ENCODE measurements at regions of chr4 and their contacts with region 1.

Region 1: DNA sequence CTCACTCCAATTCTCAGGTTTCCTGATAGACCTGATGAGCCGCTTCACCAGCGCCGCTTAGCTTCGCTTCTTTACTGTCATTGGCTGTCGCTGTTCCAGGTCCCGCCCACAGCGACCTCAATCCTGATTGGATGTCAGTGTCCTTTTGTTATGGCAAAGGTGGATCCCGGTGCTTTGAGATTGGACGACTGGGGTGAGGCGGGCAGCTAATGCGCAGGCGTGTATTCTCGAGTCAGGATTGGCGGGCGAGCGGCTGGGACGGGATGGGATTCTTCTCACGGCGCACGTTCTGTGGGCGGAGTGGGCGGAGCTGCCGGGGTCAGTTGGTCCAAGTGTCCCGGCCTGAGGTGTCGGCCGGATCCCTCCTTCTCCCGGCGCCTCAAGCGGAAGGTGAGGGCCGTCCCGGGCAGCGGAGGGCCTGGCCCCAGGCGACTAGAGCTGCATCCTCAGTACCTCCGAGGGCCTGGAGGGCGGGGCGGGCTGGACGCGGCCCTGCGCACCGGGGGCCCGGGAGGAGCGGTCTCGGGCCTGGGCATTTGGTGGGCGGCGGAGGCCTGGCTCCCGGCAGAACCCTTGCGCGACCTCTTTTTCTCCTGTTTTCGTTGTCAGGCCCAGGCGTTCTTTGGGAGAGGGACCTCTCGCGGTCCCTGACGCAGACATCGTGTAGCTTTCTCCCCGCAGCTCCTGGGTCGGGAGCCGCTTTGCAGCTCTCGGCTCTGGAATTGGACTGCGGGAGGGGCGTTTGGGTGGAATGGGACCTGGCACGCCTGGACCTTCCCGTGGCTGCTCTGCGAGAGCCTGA is at the start of gene SCOC:
- DNase-seq: peak; percentile 99
- ATAC-seq: peak; percentile 100
- H3K4me3 ChIP-seq: peak within 1 kb of the TSS; percentile 77 to 89
- H3K27ac ChIP-seq: peak within 1 kb of the TSS; percentile 67 to 83
- H3K4me1 ChIP-seq: peaks cover 0 to 2% of the 10 kb centered on the region in 2 donors
- H3K27me3 ChIP-seq: no peaks in the 10 kb centered on the region
- total RNA-seq, gene SCOC: 38.5 to 45.6 TPM

Region 2: DNA sequence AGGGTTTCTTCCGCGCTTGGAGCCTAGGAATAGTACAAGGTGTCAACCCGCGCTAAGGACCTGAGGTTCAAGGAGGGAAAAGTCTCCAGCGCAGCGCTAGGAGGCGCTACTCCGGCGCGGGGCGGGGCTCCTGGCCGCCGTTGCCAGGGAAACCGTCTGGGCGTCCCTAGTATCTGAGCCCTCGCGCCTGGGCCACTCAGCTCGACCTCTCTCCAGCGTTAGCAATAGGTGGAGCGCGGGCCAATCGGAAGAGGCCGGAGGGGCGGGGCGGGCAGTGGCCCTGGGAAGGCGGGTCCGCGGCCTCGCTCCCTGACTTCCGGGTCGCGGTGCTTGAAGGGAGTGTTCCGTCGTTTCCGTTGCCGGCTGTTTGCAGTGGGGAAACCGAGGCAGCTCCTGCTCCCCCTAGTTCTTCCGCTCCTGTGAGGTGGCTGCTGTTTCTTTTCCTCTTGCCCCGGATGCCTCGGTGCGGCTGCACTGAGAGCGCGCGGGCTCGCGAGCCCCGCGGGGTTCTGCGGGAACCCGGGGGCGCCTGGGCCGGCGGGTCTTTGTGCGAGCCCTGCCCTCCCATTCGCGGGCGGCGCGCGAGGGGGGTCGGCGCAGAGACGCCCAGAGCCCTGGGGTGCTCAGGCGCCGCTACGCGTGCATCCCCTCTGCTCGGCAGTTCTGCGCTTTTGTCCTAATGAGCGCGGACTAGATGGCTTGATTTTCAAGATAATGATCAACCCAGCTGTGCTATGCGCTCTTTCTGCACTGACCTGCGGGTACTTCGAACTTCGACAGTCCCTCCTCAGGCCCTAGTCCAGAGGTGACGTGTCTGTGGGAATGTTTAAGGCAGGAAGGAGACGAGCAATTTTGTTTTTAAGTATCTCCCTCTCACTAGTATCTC is 150.6 kb after region 1 on chr4 and contains the start of gene ELMOD2:
- intact Hi-C with region 1: loop called (anchors 5 kb)
- DNase-seq: peak; percentile 100
- ATAC-seq: peak; percentile 100
- H3K4me3 ChIP-seq: peak within 1 kb of the TSS; percentile 20 to 77
- H3K27ac ChIP-seq: no peak within 1 kb of the TSS
- H3K4me1 ChIP-seq: no peaks in the 10 kb centered on the region
- H3K27me3 ChIP-seq: no peaks in the 10 kb centered on the region
- total RNA-seq, gene ELMOD2: 23.0 to 25.7 TPM